Endothelial cell of umbilical vein (primary cell): ENCODE measurements at regions of chr3 and their contacts with region 1.

Region 1: GRCh38 chr3:197029511-197030167 is at the start of gene MELTF:
- DNase-seq: peak; percentile 25
- H3K4me3 ChIP-seq: peak within 1 kb of the TSS in 2 of 3 experiments; percentile 14 to 22
- H3K27ac ChIP-seq: no peak within 1 kb of the TSS
- H3K4me1 ChIP-seq: peaks cover 9% of the 10 kb centered on the region
- H3K27me3 ChIP-seq: peaks cover 0 to 1% of the 10 kb centered on the region in 2 experiments
- CTCF ChIP-seq: peak; percentile 56 to 80
- POLR2A ChIP-seq: no peak
- total RNA-seq, gene MELTF: 1.3 and 2.3 TPM in 2 replicates

Region 2: GRCh38 chr3:197002701-197003454 is 26.8 kb before region 1 on chr3:
- CTCF ChIA-PET with region 1: interaction called, 40 read pairs
- POLR2A ChIA-PET with region 1: no interaction called
- dilution Hi-C with region 1: no loop called
- intact Hi-C with region 1: loop called (anchors 1 kb)
- DNase-seq: peak; percentile 47
- H3K4me3 ChIP-seq: peak overlapping the region; percentile 17 to 61 (median 24)
- H3K27ac ChIP-seq: no peak overlapping the region
- H3K4me1 ChIP-seq: peaks cover 2% of the 10 kb centered on the region
- H3K27me3 ChIP-seq: no peaks in the 10 kb centered on the region
- CTCF ChIP-seq: peak; percentile 62 to 65
- POLR2A ChIP-seq: peak; percentile 38

Region 3: GRCh38 chr3:197015766-197016736 is 13.6 kb before region 1 on chr3:
- CTCF ChIA-PET with region 1: interaction called, 10 read pairs
- POLR2A ChIA-PET with region 1: no interaction called
- dilution Hi-C with region 1: no loop called
- intact Hi-C with region 1: no loop called
- DNase-seq: no peak
- H3K4me3 ChIP-seq: no peak overlapping the region
- H3K27ac ChIP-seq: no peak overlapping the region
- H3K4me1 ChIP-seq: no peaks in the 10 kb centered on the region
- H3K27me3 ChIP-seq: peaks cover 6 to 18% of the 10 kb centered on the region in 2 experiments
- CTCF ChIP-seq: no peak
- POLR2A ChIP-seq: no peak

Region 4: GRCh38 chr3:197068077-197068476 is 38.4 kb after region 1 on chr3:
- CTCF ChIA-PET with region 1: no interaction called
- POLR2A ChIA-PET with region 1: no interaction called
- dilution Hi-C with region 1: no loop called
- intact Hi-C with region 1: no loop called
- DNase-seq: no peak
- H3K4me3 ChIP-seq: no peak overlapping the region
- H3K27ac ChIP-seq: no peak overlapping the region
- H3K4me1 ChIP-seq: no peaks in the 10 kb centered on the region
- H3K27me3 ChIP-seq: no peaks in the 10 kb centered on the region
- CTCF ChIP-seq: no peak
- POLR2A ChIP-seq: no peak

Region 5: GRCh38 chr3:197103766-197104165 is 74.1 kb after region 1 on chr3:
- CTCF ChIA-PET with region 1: no interaction called
- POLR2A ChIA-PET with region 1: no interaction called
- dilution Hi-C with region 1: no loop called
- intact Hi-C with region 1: no loop called
- DNase-seq: no peak
- H3K4me3 ChIP-seq: no peak overlapping the region
- H3K27ac ChIP-seq: no peak overlapping the region
- H3K4me1 ChIP-seq: no peaks in the 10 kb centered on the region
- H3K27me3 ChIP-seq: no peaks in the 10 kb centered on the region
- CTCF ChIP-seq: no peak
- POLR2A ChIP-seq: no peak